Activated CD4-positive, alpha-beta memory T cell treated with anti-CD3 and anti-CD28 coated beads, Interleukin-2, amount 10 ng/mL, durations not matched to agents 7 days and 5 days (primary cell): ENCODE measurements at regions of chr2 and their contacts with region 1.

Region 1: DNA sequence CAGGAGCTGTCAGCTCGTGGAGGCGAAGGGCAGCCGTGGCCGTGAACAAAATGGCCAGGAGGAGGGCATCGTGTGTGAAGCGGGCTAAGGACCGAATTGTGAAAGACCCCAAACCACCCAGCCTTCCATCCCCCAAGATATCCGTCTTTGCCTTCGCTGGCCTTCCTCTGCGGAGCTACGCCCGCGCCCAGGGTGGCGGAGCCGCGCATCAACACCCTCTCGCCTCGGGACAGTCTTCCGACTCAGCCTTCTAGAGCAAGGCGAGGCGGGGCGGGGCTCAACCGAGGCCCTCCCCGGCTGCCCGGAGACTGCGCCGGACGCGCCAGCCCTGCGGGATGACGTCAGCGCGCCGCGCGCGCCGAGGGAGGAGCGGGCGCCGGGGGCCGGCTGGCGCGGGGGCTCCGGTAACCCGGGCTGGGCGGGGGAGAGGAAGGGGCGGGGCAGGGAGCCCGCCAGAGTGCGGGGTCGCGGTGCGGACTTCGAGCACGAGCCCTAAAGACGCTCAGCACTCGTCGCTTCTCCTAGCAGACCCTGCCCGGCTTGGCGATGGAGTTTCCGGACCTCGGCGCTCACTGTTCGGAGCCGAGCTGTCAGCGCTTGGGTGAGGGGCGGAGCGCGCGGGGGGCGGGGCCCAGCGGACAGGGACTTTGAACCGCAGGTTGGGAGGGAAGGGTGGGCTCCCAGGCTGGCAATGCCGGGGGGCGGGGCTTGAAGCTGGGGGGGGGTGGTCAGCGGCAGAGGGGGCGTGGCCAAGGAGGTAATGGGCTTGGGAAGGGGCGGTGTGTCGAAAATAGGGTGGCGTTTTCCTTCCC is at the start of gene ZFAND2B:
- DNase-seq: peak; percentile 96
- H3K4me3 Mint-ChIP-seq: peak within 1 kb of the TSS; percentile 79
- H3K27ac Mint-ChIP-seq: peak within 1 kb of the TSS; percentile 88
- H3K4me1 Mint-ChIP-seq: peaks cover 52% of the 10 kb centered on the region
- H3K27me3 Mint-ChIP-seq: no peaks in the 10 kb centered on the region
- total RNA-seq, gene ZFAND2B: 51.4 to 56.7 TPM

Region 2: GRCh38 chr2:218832520-218832919 is 374.1 kb before region 1 on chr2:
- CTCF ChIA-PET with region 1: no interaction called
- POLR2A ChIA-PET with region 1: no interaction called
- DNase-seq: no peak
- H3K4me3 Mint-ChIP-seq: no peak overlapping the region
- H3K27ac Mint-ChIP-seq: no peak overlapping the region
- H3K4me1 Mint-ChIP-seq: no peaks in the 10 kb centered on the region
- H3K27me3 Mint-ChIP-seq: peaks cover 28% of the 10 kb centered on the region

Region 3: GRCh38 chr2:219177552-219178376 is 28.9 kb before region 1 on chr2 and contains the start of gene RETREG2:
- CTCF ChIA-PET with region 1: interaction called, 12 read pairs
- POLR2A ChIA-PET with region 1: interaction called, 160 read pairs
- DNase-seq: peak; percentile 84
- H3K4me3 Mint-ChIP-seq: peak within 1 kb of the TSS; percentile 85
- H3K27ac Mint-ChIP-seq: peak within 1 kb of the TSS; percentile 99
- H3K4me1 Mint-ChIP-seq: peaks cover 72% of the 10 kb centered on the region
- H3K27me3 Mint-ChIP-seq: no peaks in the 10 kb centered on the region
- total RNA-seq, gene RETREG2: 107 to 113 TPM

Region 4: GRCh38 chr2:219218732-219219701 is 12.4 kb after region 1 on chr2 and contains the start of gene ABCB6:
- CTCF ChIA-PET with region 1: interaction called, 12 read pairs
- POLR2A ChIA-PET with region 1: interaction called, 38 read pairs
- DNase-seq: peak; percentile 88
- H3K4me3 Mint-ChIP-seq: peak within 1 kb of the TSS; percentile 85
- H3K27ac Mint-ChIP-seq: peak within 1 kb of the TSS; percentile 82
- H3K4me1 Mint-ChIP-seq: peaks cover 38% of the 10 kb centered on the region
- H3K27me3 Mint-ChIP-seq: no peaks in the 10 kb centered on the region
- total RNA-seq, gene ABCB6: 15.2 to 17.9 TPM

Region 5: DNA sequence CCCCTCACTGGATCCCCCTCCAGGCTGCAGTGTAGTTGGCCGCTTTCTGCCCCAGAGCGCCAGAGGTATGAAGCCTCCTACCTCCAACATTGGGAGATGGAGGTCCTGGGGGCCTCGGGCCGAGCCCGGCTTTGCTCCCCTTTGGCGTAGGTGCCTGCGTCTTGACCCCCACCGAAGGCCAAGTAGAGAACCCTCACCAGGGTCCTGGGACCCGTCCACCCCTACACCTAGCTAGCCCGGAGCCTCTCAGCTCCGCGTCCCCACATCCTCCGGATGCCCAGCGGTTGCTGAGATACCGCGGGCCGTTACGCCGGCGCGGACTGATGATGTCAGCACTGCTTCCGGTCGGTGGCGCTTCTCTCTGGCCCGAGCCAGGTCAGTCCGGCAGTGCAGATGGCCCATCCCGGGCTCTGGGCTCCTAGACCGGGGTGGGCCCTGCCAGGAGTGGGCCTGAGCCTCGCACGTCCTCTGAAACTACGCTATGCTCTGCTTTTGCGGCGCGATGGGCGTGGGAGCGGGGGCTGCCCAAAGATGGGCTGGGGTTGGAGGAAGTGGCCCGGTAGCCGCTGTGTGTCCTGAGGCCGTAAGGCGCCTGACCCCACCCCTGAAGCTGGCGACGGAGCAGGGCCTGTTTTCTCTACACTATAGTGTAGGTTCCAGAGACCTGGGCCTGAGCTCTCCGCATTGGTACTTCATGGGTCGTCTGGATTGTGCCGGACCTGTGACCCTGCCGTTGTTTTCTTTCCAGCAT is 38.7 kb after region 1 on chr2 and contains the starts of genes GLB1L and STK16:
- CTCF ChIA-PET with region 1: interaction called, 3 read pairs
- POLR2A ChIA-PET with region 1: interaction called, 10 read pairs
- DNase-seq: peak; percentile 92
- H3K4me3 Mint-ChIP-seq: peak within 1 kb of the TSS; percentile 100
- H3K27ac Mint-ChIP-seq: peak within 1 kb of the TSS; percentile 81
- H3K4me1 Mint-ChIP-seq: peaks cover 66% of the 10 kb centered on the region
- H3K27me3 Mint-ChIP-seq: no peaks in the 10 kb centered on the region
- total RNA-seq, gene GLB1L: 6.2 to 7.3 TPM
- total RNA-seq, gene STK16: 41.6 to 42.3 TPM

Region 6: GRCh38 chr2:219278655-219279516 is 72.2 kb after region 1 on chr2 and contains the start of gene DNAJB2:
- CTCF ChIA-PET with region 1: interaction called, 7 read pairs
- POLR2A ChIA-PET with region 1: interaction called, 12 read pairs
- DNase-seq: peak; percentile 99
- H3K4me3 Mint-ChIP-seq: peak within 1 kb of the TSS; percentile 87
- H3K27ac Mint-ChIP-seq: peak within 1 kb of the TSS; percentile 93
- H3K4me1 Mint-ChIP-seq: peaks cover 42% of the 10 kb centered on the region
- H3K27me3 Mint-ChIP-seq: peaks cover 3% of the 10 kb centered on the region
- total RNA-seq, gene DNAJB2: 57.0 to 59.7 TPM